ENCODE measurements at regions of chr9 and their contacts with region 1.

Region 1: DNA sequence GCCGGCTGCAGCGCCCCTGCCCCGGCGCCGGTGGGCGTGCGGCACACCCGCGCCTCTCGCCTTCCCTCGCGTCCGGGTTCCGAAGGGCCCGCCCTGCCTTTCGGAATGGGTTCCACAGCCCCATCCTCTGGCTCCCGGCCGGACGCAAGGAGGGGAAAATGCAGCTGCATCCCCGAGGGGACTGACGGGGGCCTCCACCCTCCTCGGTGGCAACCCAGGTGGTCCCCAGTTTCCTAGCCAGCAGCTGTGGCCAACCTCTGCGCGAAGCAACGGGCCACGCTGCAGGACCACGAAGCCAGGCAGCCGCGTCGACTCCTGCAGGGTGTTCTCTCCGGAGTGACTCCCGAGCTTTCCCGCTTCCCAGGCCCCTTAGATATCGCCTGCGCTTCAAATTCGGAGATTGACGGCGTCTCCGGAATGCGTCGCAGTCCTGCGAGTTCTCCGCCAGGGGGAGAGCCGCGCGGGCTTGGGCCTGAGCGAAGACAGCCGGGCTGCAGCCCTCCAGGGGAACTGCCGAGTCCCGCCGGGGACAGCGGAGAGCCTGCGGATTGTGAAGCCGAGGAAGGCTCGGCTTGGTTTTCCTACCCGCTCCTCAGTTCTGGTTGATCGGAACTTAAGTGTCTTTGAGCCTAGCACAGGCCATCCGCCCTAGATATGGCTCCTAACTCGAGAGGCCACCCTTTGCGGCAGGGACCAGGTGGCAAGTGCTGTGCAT is 582 bp upstream of the APBA1 start:
- DNase-seq: peak; percentile 73
- H3K4me3 Mint-ChIP-seq: peak overlapping the region; percentile 72
- H3K27ac Mint-ChIP-seq: no peak overlapping the region
- H3K4me1 Mint-ChIP-seq: peaks cover 17% of the 10 kb centered on the region
- H3K27me3 Mint-ChIP-seq: peaks cover 31% of the 10 kb centered on the region

Region 2: DNA sequence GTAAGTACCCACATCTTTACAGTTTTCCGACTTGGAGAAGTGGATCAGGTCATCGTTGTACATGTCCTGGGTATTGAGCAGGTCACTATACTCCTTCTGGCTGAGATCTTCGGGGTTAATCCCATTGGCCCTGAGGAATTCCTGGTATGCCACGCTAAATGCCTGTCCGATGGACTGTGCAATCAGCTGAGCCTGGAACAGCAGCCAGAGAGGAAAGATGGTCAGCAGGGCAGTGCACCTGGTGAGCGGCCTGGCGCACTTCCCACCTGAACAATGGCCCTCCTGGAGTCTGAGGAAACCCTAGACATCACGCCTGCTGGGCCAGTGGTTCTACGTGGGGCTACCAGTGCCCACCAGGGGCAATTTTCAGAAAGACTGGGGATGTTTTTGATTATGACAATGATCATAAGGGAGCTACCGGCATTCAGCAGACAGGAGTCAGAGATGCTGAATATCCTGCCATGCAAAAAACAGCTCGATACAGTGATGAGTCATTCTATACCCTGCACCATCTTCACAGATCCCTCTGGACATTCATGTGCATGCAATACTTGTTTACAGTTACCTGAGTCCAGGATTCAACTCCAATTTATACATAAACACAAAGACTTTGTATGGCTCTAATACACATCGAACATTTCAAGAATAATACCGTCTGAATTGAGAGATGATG is 220.5 kb before region 1 on chr9:
- CTCF ChIA-PET with region 1: no interaction called
- POLR2A ChIA-PET with region 1: no interaction called
- DNase-seq: no peak
- H3K4me3 Mint-ChIP-seq: no peak overlapping the region
- H3K27ac Mint-ChIP-seq: no peak overlapping the region
- H3K4me1 Mint-ChIP-seq: no peaks in the 10 kb centered on the region
- H3K27me3 Mint-ChIP-seq: no peaks in the 10 kb centered on the region

Region 3: GRCh38 chr9:69718218-69718617 is 45.5 kb after region 1 on chr9:
- CTCF ChIA-PET with region 1: no interaction called
- POLR2A ChIA-PET with region 1: no interaction called
- DNase-seq: no peak
- H3K4me3 Mint-ChIP-seq: no peak overlapping the region
- H3K27ac Mint-ChIP-seq: no peak overlapping the region
- H3K4me1 Mint-ChIP-seq: no peaks in the 10 kb centered on the region
- H3K27me3 Mint-ChIP-seq: no peaks in the 10 kb centered on the region

Region 4: GRCh38 chr9:69877854-69878514 is 205.2 kb after region 1 on chr9:
- CTCF ChIA-PET with region 1: interaction called, 12 read pairs
- POLR2A ChIA-PET with region 1: no interaction called
- DNase-seq: no peak
- H3K4me3 Mint-ChIP-seq: no peak overlapping the region
- H3K27ac Mint-ChIP-seq: no peak overlapping the region
- H3K4me1 Mint-ChIP-seq: no peaks in the 10 kb centered on the region
- H3K27me3 Mint-ChIP-seq: peaks cover 23% of the 10 kb centered on the region